ENCODE measurements at regions of chr3 and their contacts with region 1.

Region 1: GRCh38 chr3:151203051-151203420 is at the start of gene GPR171:
- DNase-seq: peak; percentile 70
- H3K4me3 Mint-ChIP-seq: peak within 1 kb of the TSS; percentile 91
- H3K27ac Mint-ChIP-seq: peak within 1 kb of the TSS; percentile 95
- H3K4me1 Mint-ChIP-seq: peaks cover 52% of the 10 kb centered on the region
- H3K27me3 Mint-ChIP-seq: no peaks in the 10 kb centered on the region
- total RNA-seq, gene GPR171: 232 TPM in 2 replicates

Region 2: DNA sequence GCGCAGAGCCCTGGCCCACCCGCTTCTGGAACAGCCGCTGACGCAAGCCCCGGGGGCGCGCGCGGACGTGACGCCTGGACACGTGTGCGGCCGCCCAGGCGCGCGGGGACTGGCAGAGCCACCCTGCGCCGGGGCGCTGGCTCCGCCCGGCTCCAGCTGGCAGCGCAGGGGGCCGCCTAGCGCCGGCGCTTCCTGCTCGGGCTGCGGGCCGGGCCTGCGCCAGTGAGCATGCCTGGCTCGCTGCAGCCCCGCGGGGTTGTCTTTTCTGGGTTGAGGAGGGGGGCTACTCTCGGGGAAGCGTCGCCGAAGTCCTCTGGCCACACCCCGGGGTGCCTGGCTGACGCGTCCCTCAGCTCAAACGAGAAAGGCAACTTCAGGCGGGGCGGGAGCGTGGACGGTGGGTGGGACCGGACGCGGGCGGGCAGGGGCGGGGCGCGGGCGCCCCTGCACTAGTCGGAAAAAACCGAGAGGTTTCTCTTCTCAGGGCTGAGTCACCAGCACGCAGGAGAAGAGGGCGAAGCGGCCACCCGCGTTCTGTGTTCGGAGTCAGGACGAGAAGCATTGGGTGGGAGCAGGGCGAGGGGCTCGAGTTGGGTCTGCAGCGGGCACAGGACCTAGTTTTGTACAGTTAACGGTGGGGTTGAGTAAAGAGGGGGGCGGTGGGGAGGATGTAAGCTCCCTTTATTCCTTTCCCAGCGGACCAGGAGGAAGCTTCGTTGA is 439.8 kb before region 1 on chr3 and contains the start of gene SIAH2:
- intact Hi-C with region 1: loop called (anchors 2 kb)
- DNase-seq: peak; percentile 91
- H3K4me3 Mint-ChIP-seq: peak within 1 kb of the TSS; percentile 100
- H3K27ac Mint-ChIP-seq: peak within 1 kb of the TSS; percentile 100
- H3K4me1 Mint-ChIP-seq: peaks cover 50% of the 10 kb centered on the region
- H3K27me3 Mint-ChIP-seq: no peaks in the 10 kb centered on the region
- total RNA-seq, gene SIAH2: 108 and 116 TPM in 2 replicates

Region 3: GRCh38 chr3:151191095-151191494 is 11.9 kb before region 1 on chr3:
- intact Hi-C with region 1: loop called (anchors 1 kb)
- DNase-seq: no peak
- H3K4me3 Mint-ChIP-seq: peak overlapping the region; percentile 65
- H3K27ac Mint-ChIP-seq: peak overlapping the region; percentile 97
- H3K4me1 Mint-ChIP-seq: peaks cover 48% of the 10 kb centered on the region
- H3K27me3 Mint-ChIP-seq: no peaks in the 10 kb centered on the region

Region 4: GRCh38 chr3:151268267-151269235 is 65.5 kb after region 1 on chr3:
- intact Hi-C with region 1: loop called (anchors 2 kb)
- DNase-seq: peak; percentile 35
- H3K4me3 Mint-ChIP-seq: peak overlapping the region; percentile 7
- H3K27ac Mint-ChIP-seq: peak overlapping the region; percentile 83
- H3K4me1 Mint-ChIP-seq: peaks cover 38% of the 10 kb centered on the region
- H3K27me3 Mint-ChIP-seq: no peaks in the 10 kb centered on the region

Region 5: DNA sequence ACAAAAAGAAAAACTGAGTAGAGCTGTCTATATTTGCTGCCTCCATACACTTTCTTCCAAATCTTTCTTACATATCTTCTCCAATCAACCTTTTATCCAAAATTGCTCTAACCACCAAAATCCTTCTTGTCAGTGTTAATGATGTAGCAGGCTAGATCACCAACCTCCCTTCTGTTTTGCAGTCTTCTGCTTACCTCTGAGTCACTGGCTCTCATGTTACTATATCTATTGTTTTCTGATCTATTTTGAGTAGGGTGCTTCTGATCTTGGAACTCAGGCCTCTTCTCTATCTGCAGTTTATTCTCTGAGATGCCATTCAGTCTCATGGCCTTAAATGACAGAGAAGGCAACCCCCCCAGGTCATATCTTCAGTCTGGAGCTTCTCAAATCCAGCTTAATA is 584.6 kb after region 1 on chr3:
- intact Hi-C with region 1: no loop called
- DNase-seq: no peak
- H3K4me3 Mint-ChIP-seq: no peak overlapping the region
- H3K27ac Mint-ChIP-seq: no peak overlapping the region
- H3K4me1 Mint-ChIP-seq: no peaks in the 10 kb centered on the region
- H3K27me3 Mint-ChIP-seq: peaks cover 2% of the 10 kb centered on the region

Region 6: DNA sequence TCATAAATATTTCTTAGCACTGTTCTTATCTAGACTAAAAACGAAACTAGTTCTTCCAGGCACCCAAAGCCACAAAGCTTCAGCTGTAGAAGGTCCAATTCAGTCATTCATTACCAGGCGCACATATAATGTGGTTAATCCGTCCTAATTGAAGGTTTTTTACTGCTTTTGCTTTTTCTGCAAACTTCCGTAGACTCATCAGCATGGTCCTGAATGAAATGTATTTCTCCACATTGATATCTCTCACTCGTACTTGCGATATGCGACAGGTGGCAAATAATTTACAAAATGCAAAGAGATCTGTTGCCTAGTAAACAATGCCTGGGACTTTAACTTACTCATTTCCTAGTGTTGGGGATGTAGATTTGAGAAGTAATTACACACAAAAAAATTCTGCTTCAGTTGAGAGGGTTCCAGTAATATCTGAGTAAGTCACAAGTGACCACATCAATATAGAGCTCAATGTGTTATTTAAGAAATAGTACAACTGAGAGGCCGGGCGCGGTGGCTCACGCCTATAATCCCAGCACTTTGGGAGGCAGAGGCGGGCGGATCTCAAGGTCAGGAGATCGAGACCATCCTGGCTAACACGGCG is 990.7 kb after region 1 on chr3:
- intact Hi-C with region 1: loop called (anchors 2 kb)
- DNase-seq: peak; percentile 29
- H3K4me3 Mint-ChIP-seq: peak overlapping the region; percentile 69
- H3K27ac Mint-ChIP-seq: peak overlapping the region; percentile 89
- H3K4me1 Mint-ChIP-seq: peaks cover 75% of the 10 kb centered on the region
- H3K27me3 Mint-ChIP-seq: no peaks in the 10 kb centered on the region

Region 7: GRCh38 chr3:153161138-153161713 is 1958.2 kb after region 1 on chr3:
- intact Hi-C with region 1: loop called (anchors 10 kb)
- DNase-seq: peak; percentile 93
- H3K4me3 Mint-ChIP-seq: peak overlapping the region; percentile 94
- H3K27ac Mint-ChIP-seq: peak overlapping the region; percentile 97
- H3K4me1 Mint-ChIP-seq: peaks cover 31% of the 10 kb centered on the region
- H3K27me3 Mint-ChIP-seq: no peaks in the 10 kb centered on the region